ENCODE measurements at regions of chr3 and their contacts with region 1.

Region 1: DNA sequence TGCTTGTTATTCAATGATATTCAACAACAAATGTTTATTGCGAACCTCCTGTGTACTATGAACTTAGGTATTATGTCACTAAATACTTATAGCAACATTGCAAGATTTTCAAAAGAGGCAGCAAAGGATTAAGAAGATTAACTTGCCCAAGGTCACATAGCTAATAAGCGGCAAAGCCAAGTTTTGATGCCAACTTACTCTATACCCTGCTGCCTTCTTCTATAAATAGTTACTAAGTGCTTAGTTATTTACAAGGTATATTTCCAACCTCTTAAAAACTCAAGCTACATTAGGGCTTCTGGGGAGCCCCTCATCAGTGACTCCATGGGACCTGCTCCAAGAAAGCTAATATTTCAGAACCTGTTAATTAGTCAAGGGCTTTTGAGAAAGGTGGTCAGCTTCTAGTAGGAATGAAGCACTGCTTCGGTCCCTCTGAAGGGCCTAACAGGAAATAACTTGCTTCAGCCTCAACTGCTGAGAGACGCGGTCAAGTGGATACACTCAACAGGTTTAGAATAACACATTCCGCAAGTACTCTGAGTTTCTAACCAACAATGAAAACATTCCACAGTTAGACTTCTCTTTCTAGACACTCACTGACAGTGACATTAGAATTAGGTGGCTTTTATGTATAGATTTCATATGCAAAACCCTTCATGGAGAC is 125.5 kb downstream of the DGKG start:
- DNase-seq: no peak
- H3K4me3 ChIP-seq: no peak overlapping the region
- H3K27ac ChIP-seq: no peak overlapping the region
- H3K4me1 ChIP-seq: peaks cover 0 to under 1% (median 0%) of the 10 kb centered on the region in 4 donors
- H3K27me3 ChIP-seq: no peaks in the 10 kb centered on the region
- CTCF ChIP-seq: no peak
- EP300 ChIP-seq: no peak
- POLR2A ChIP-seq: no peak

Region 2: GRCh38 chr3:184952671-184953070 is 1283.8 kb before region 1 on chr3:
- in situ Hi-C with region 1: no loop called
- intact Hi-C with region 1: no loop called
- DNase-seq: no peak
- H3K4me3 ChIP-seq: no peak overlapping the region
- H3K27ac ChIP-seq: no peak overlapping the region
- H3K4me1 ChIP-seq: peaks cover 0 to 5% (median 0%) of the 10 kb centered on the region in 4 donors
- H3K27me3 ChIP-seq: no peaks in the 10 kb centered on the region
- CTCF ChIP-seq: no peak
- EP300 ChIP-seq: no peak
- POLR2A ChIP-seq: no peak

Region 3: GRCh38 chr3:186193534-186194450 is 42.7 kb before region 1 on chr3:
- in situ Hi-C with region 1: no loop called
- intact Hi-C with region 1: loop called (anchors 2 kb)
- DNase-seq: no peak
- H3K4me3 ChIP-seq: peak overlapping the region in 2 of 4 donors; percentile 3 to 37
- H3K27ac ChIP-seq: no peak overlapping the region
- H3K4me1 ChIP-seq: peaks cover 0 to 7% (median 0%) of the 10 kb centered on the region in 4 donors
- H3K27me3 ChIP-seq: peaks cover 53% of the 10 kb centered on the region
- CTCF ChIP-seq: no peak
- EP300 ChIP-seq: no peak
- POLR2A ChIP-seq: no peak

Region 4: DNA sequence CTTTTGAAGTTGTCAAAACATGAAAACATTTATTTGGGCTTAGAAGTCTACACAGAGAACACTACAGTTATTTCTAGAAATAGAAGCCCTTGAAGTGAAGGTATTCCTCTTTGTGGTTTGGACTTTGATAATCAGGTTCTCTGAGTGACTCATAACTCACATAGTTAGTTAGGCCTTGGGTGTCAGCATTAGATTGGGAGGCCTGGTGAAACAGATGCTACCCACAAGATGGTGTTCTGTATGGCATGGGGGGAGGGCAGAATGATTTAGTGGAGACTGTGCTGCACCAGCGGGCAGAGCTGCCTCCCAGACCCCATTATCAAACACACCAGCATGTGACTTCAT is 18.7 kb before region 1 on chr3:
- in situ Hi-C with region 1: no loop called
- intact Hi-C with region 1: no loop called
- DNase-seq: no peak
- H3K4me3 ChIP-seq: no peak overlapping the region
- H3K27ac ChIP-seq: no peak overlapping the region
- H3K4me1 ChIP-seq: no peaks in the 10 kb centered on the region
- H3K27me3 ChIP-seq: no peaks in the 10 kb centered on the region
- CTCF ChIP-seq: no peak
- EP300 ChIP-seq: no peak
- POLR2A ChIP-seq: no peak

Measured in transverse colon (tissue), 4 donors.